Right ventricle myocardium superior (tissue), 1 donor: ENCODE measurements at regions of chr4 and their contacts with region 1.

Region 1: GRCh38 chr4:64539234-64539849 is 130.1 kb upstream of the TECRL start:
- DNase-seq: no peak
- ATAC-seq: peak; percentile 86

Region 2: GRCh38 chr4:64230709-64231310 is 308.5 kb before region 1 on chr4:
- intact Hi-C with region 1: no loop called
- DNase-seq: no peak
- ATAC-seq: no peak

Region 3: GRCh38 chr4:64399313-64400109 is 139.8 kb before region 1 on chr4:
- intact Hi-C with region 1: loop called (anchors 10 kb)
- DNase-seq: no peak
- ATAC-seq: no peak

Region 4: DNA sequence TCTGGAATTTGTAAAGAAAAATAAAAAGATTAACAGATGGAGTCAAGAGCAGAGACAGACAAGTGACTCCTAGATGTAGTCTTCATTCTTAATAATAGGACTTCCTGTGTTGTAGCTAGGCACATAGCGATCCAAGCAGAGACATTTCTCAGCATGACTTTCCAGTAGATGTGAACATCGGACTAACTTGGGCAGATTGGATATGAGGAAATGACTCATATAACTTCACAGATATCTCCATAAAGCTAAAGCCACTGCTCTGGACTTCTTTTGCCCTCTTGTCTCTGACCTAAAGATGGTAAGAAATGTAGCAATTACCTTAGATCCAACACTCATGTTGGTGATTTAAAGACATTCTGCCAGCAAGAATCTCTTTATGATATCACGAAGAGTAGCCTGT is 999.2 kb after region 1 on chr4:
- intact Hi-C with region 1: no loop called
- DNase-seq: no peak
- ATAC-seq: no peak